Endothelial cell of umbilical vein (primary cell): ENCODE measurements at regions of chr6 and their contacts with region 1.

Region 1: GRCh38 chr6:132648356-132649227 is 10.4 kb downstream of the TAAR1 start:
- DNase-seq: peak; percentile 27
- H3K4me3 ChIP-seq: no peak overlapping the region
- H3K27ac ChIP-seq: no peak overlapping the region
- H3K4me1 ChIP-seq: no peaks in the 10 kb centered on the region
- H3K27me3 ChIP-seq: no peaks in the 10 kb centered on the region
- CTCF ChIP-seq: no peak
- POLR2A ChIP-seq: no peak

Region 2: GRCh38 chr6:132465530-132466485 is 182.8 kb before region 1 on chr6:
- CTCF ChIA-PET with region 1: no interaction called
- POLR2A ChIA-PET with region 1: no interaction called
- dilution Hi-C with region 1: no loop called
- intact Hi-C with region 1: no loop called
- DNase-seq: peak; percentile 59
- H3K4me3 ChIP-seq: no peak overlapping the region
- H3K27ac ChIP-seq: no peak overlapping the region
- H3K4me1 ChIP-seq: peaks cover 14% of the 10 kb centered on the region
- H3K27me3 ChIP-seq: no peaks in the 10 kb centered on the region
- CTCF ChIP-seq: no peak
- POLR2A ChIP-seq: no peak

Region 3: GRCh38 chr6:132683543-132683942 is 35.0 kb after region 1 on chr6:
- CTCF ChIA-PET with region 1: no interaction called
- POLR2A ChIA-PET with region 1: no interaction called
- dilution Hi-C with region 1: no loop called
- intact Hi-C with region 1: loop called (anchors 1 kb)
- DNase-seq: no peak
- H3K4me3 ChIP-seq: no peak overlapping the region
- H3K27ac ChIP-seq: no peak overlapping the region
- H3K4me1 ChIP-seq: no peaks in the 10 kb centered on the region
- H3K27me3 ChIP-seq: peaks cover 0 to 5% of the 10 kb centered on the region in 2 experiments
- CTCF ChIP-seq: no peak
- POLR2A ChIP-seq: no peak